ENCODE measurements at regions of chr9 and their contacts with region 1.

Region 1: DNA sequence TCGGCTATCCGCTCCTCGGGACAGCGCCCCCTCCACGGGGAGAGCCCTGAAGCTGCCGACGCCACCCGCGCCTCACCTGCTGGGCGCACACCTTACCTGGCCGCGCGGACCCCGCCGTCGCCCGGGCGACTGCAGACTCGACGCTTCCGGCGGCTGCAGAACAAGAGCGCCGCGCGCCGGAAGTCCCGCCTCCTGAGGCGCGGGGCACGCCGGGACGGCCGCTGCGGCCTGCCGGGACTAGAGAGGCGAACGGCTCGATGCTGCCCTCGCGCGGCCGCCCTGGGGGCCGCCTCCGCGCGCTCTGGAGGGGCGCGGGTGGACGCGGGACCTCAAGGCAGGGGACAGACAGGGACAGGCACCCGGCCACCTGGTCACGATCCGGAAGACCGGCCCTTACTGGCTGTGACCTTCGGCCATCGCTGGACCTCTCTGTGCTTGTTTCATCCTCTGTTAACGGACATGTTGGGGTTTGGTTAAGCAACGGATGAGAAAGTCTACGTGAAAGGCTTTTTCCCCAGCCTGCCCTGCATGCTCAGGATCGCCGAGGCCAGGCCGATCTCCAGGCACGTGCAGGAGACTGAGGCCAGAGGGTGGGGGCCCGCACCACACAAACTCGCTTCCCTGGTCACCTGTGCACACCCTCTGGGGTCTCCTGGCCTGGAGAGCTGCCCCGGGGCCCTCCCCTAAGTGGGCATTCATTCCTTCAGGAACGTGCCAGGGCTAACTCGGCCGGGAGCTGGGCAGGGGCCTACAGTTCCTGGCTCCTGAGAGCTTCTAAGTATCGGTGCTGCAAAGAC is at the start of gene SNAPC4:
- DNase-seq: peak; percentile 89
- ATAC-seq: peak; percentile 92 to 95
- total RNA-seq, gene SNAPC4: 3.4 to 3.8 TPM

Region 2: GRCh38 chr9:136312436-136312835 is 87.8 kb before region 1 on chr9:
- intact Hi-C with region 1: loop called in 1 of 2 experiments (anchors 5 kb)
- DNase-seq: no peak
- ATAC-seq: peak; percentile 72 to 81

Region 3: GRCh38 chr9:136342181-136343120 is 57.8 kb before region 1 on chr9:
- intact Hi-C with region 1: loop called in 1 of 2 experiments (anchors 10 kb)
- DNase-seq: peak; percentile 89
- ATAC-seq: peak; percentile 64 to 67

Measured in left cardiac atrium (tissue), 4 donors.